Naive thymus-derived CD4-positive, alpha-beta T cell (primary cell): ENCODE measurements at regions of chr22 and their contacts with region 1.

Region 1: DNA sequence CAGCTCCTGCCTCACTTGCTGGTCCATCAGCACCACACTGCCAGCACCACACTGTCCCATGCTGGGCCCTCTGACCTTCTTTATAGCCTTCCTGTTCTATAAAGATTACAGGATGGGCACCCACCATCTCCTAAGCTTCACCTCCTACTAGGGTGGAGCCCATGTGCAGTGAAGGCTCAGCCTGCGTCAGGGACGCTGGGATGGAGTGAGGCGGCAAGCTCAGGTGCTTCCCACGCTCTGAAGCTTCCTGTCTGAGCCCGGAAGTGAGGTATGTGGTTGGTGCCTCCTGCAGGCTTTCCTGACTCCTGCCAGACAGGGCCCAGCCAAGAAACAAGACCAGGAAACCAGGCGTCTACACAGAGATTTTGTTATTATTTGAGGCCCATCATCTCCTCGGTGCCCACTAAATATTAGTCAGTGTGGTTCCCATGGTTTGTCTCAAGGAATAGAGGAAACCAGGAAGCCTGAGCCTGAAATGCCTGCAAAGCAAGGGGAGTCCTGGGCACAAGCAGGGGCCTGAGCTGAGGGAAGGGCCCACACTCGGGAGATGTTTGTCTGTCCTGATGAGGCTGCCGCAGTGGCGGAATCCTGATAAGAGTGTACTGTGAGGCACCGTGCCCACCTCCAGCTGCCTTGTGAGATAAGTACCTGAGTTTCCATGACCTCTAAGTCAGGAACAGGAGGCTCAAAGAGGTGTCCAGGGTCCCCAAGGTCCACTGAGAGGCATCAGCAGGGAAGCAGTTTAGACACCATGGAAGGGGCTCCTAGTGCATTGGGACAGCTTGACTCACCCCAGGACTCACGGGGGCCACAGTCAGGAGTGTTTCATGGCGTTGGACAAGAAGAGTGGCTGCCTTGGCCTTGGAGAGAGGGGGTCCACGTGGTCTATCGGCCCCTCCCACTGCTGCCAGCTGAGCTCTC is 22.0 kb downstream of the RSPH14 start:
- DNase-seq: peak; percentile 25 to 76 (median 66)
- ATAC-seq: peak; percentile 83
- H3K4me3 ChIP-seq: peak overlapping the region; percentile 41
- H3K4me3 Mint-ChIP-seq: peak overlapping the region; percentile 45 to 81 (median 77)
- H3K27ac ChIP-seq: peak overlapping the region; percentile 62
- H3K27ac Mint-ChIP-seq: peak overlapping the region; percentile 88 to 98 (median 96)
- H3K4me1 ChIP-seq: peaks cover 13 to 16% of the 10 kb centered on the region in 2 donors
- H3K4me1 Mint-ChIP-seq: peaks cover 9 to 19% (median 10%) of the 10 kb centered on the region in 7 donors
- H3K27me3 ChIP-seq: no peaks in the 10 kb centered on the region
- H3K27me3 Mint-ChIP-seq: no peaks in the 10 kb centered on the region

Region 2: DNA sequence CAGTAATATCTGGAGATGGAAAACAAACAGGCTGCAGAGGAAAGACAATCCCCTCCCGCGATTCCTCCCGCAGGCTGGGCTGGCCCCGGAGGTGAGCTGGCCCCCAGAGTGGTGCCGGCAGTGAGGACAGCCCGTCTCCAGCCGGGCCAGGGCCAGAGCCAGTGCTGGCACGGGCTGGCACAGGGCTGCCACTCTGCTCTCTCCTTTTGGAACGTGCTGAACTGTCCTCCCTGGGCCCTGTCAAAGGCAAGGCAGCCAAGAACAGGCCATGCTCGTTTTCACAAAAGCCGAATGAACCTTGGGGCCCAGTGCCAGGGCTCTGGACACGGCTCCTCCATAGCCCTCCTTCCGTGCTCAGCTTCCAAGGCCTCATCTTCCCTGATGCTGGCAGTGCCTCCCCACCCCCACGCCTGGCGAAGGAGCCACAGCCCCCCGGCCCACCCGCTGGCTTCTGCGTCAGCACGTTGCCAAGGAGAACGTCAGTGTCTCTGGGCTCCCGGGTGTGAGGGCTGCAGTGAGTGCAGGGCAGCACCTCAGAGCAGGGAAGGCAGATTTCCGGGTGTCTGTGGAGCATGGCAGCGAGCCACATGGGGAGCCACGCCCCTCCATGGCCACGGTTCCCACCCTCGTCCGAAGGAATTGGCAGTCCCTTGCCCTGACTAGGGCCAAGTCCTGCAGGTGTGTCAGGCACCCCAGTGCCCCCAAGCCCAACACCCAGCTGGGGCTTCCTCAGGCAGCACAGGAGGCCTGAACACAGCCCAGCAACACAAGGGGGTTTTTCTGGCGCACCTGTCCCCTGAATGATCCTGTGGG is 20.8 kb before region 1 on chr22:
- CTCF ChIA-PET with region 1: no interaction called
- POLR2A ChIA-PET with region 1: no interaction called
- intact Hi-C with region 1: no loop called
- DNase-seq: no peak
- ATAC-seq: no peak
- H3K4me3 ChIP-seq: no peak overlapping the region
- H3K4me3 Mint-ChIP-seq: no peak overlapping the region
- H3K27ac ChIP-seq: no peak overlapping the region
- H3K27ac Mint-ChIP-seq: no peak overlapping the region
- H3K4me1 ChIP-seq: no peaks in the 10 kb centered on the region
- H3K4me1 Mint-ChIP-seq: peaks cover 0 to 1% (median 0%) of the 10 kb centered on the region in 7 donors
- H3K27me3 ChIP-seq: no peaks in the 10 kb centered on the region
- H3K27me3 Mint-ChIP-seq: no peaks in the 10 kb centered on the region

Region 3: DNA sequence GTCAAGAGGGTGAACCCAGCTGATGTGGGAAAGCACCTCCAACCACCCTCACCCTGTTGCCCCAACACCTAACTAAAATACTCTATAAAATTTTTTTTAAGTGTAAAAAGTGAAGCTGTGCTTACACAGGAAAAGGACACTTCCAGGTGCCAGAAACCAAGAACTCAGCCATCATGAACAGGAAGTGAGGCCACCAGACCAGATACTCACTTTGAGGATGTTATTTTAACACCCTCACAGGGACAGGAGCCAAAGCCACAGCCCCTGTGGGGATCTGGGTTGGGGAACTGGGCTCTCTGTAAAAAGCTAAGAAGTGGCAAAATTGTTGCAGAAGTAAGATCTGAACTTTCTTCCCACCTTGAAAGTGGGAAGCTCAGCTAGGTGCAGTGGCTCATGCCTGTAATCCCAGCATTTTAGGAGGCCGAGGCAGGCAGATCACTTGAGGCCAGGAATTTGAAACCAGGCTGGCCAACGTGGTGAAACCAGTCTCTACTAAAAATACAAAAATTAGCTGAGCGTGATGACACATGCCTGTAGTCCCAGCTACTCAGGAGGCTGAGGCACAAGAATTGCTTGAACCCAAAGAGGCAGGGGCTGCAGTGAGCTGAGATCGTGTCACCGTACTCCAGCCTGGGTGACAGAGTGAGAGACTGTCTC is 18.3 kb after region 1 on chr22:
- CTCF ChIA-PET with region 1: interaction called, 5 read pairs
- POLR2A ChIA-PET with region 1: interaction called, 11 read pairs
- intact Hi-C with region 1: no loop called
- DNase-seq: peak; percentile 25 to 61 (median 45)
- ATAC-seq: peak; percentile 54
- H3K4me3 ChIP-seq: peak overlapping the region; percentile 44
- H3K4me3 Mint-ChIP-seq: peak overlapping the region; percentile 62 to 83 (median 72)
- H3K27ac ChIP-seq: peak overlapping the region; percentile 72
- H3K27ac Mint-ChIP-seq: peak overlapping the region; percentile 91 to 99 (median 96)
- H3K4me1 ChIP-seq: peaks cover 53 to 67% of the 10 kb centered on the region in 2 donors
- H3K4me1 Mint-ChIP-seq: peaks cover 21 to 56% (median 51%) of the 10 kb centered on the region in 7 donors
- H3K27me3 ChIP-seq: no peaks in the 10 kb centered on the region
- H3K27me3 Mint-ChIP-seq: peaks cover 0 to 5% (median 0%) of the 10 kb centered on the region in 5 donors

Region 4: GRCh38 chr22:23204541-23205157 is 84.9 kb after region 1 on chr22:
- CTCF ChIA-PET with region 1: no interaction called
- POLR2A ChIA-PET with region 1: no interaction called
- intact Hi-C with region 1: no loop called
- DNase-seq: no peak
- ATAC-seq: no peak
- H3K4me3 ChIP-seq: no peak overlapping the region
- H3K4me3 Mint-ChIP-seq: no peak overlapping the region
- H3K27ac ChIP-seq: no peak overlapping the region
- H3K27ac Mint-ChIP-seq: peak overlapping the region in 1 of 9 donors; percentile 71
- H3K4me1 ChIP-seq: peaks cover 0 to 3% of the 10 kb centered on the region in 2 donors
- H3K4me1 Mint-ChIP-seq: peaks cover 9 to 75% (median 52%) of the 10 kb centered on the region in 7 donors
- H3K27me3 ChIP-seq: no peaks in the 10 kb centered on the region
- H3K27me3 Mint-ChIP-seq: no peaks in the 10 kb centered on the region

Region 5: GRCh38 chr22:23431337-23432072 is 311.8 kb after region 1 on chr22:
- CTCF ChIA-PET with region 1: no interaction called
- POLR2A ChIA-PET with region 1: no interaction called
- intact Hi-C with region 1: no loop called
- DNase-seq: no peak
- ATAC-seq: no peak
- H3K4me3 ChIP-seq: no peak overlapping the region
- H3K4me3 Mint-ChIP-seq: peak overlapping the region in 2 of 10 donors; percentile 31 to 36
- H3K27ac ChIP-seq: no peak overlapping the region
- H3K27ac Mint-ChIP-seq: no peak overlapping the region
- H3K4me1 ChIP-seq: peaks cover 0 to 5% of the 10 kb centered on the region in 2 donors
- H3K4me1 Mint-ChIP-seq: peaks cover 0 to 20% (median 12%) of the 10 kb centered on the region in 7 donors
- H3K27me3 ChIP-seq: no peaks in the 10 kb centered on the region
- H3K27me3 Mint-ChIP-seq: peaks cover 0 to 9% (median 2%) of the 10 kb centered on the region in 5 donors